Activated CD4-positive, alpha-beta memory T cell treated with anti-CD3 and anti-CD28 coated beads for 36 hours (primary cell): ENCODE measurements at regions of chr1 and their contacts with region 1.

Region 1: GRCh38 chr1:205354259-205354904 is 2.3 kb downstream of the KLHDC8A start:
- DNase-seq: peak; percentile 68
- H3K4me3 Mint-ChIP-seq: no peak overlapping the region
- H3K27ac Mint-ChIP-seq: no peak overlapping the region
- H3K4me1 Mint-ChIP-seq: no peaks in the 10 kb centered on the region
- H3K27me3 Mint-ChIP-seq: peaks cover 13% of the 10 kb centered on the region

Region 2: GRCh38 chr1:205220421-205220820 is 134.0 kb before region 1 on chr1:
- CTCF ChIA-PET with region 1: no interaction called
- POLR2A ChIA-PET with region 1: no interaction called
- intact Hi-C with region 1: no loop called
- DNase-seq: no peak
- H3K4me3 Mint-ChIP-seq: no peak overlapping the region
- H3K27ac Mint-ChIP-seq: no peak overlapping the region
- H3K4me1 Mint-ChIP-seq: peaks cover 1% of the 10 kb centered on the region
- H3K27me3 Mint-ChIP-seq: peaks cover 4% of the 10 kb centered on the region

Region 3: GRCh38 chr1:205321164-205321958 is 33.0 kb before region 1 on chr1 and contains the start of gene NUAK2:
- CTCF ChIA-PET with region 1: interaction called, 12 read pairs
- POLR2A ChIA-PET with region 1: no interaction called
- intact Hi-C with region 1: no loop called
- DNase-seq: peak; percentile 89
- H3K4me3 Mint-ChIP-seq: peak within 1 kb of the TSS; percentile 88
- H3K27ac Mint-ChIP-seq: peak within 1 kb of the TSS; percentile 72
- H3K4me1 Mint-ChIP-seq: peaks cover 60% of the 10 kb centered on the region
- H3K27me3 Mint-ChIP-seq: peaks cover 2% of the 10 kb centered on the region
- total RNA-seq, gene NUAK2: 4.4 to 4.5 TPM

Region 4: DNA sequence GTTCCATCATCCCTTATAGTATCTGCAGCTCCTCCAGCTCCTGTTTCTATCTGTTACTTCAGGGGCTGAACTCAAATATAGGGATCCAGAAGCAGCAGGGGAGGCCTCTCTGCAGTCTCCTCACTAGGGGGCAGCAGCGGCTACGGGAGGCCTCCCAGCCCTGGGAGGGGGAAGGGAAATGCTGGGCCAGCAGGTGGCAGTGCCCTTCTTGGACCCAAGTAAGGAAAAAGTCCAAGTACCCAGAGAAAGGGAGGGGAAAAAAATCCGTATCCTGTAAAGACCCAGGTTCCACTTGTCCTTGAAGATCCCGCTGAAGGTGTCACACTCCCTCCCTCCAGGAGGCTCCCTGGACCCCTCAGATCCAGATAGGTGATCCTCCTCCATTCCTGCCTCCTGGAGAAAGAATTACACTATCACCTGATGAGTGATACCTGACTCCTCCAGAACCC is 18.7 kb before region 1 on chr1:
- CTCF ChIA-PET with region 1: interaction called, 34 read pairs
- POLR2A ChIA-PET with region 1: no interaction called
- intact Hi-C with region 1: no loop called
- DNase-seq: peak; percentile 89
- H3K4me3 Mint-ChIP-seq: no peak overlapping the region
- H3K27ac Mint-ChIP-seq: no peak overlapping the region
- H3K4me1 Mint-ChIP-seq: peaks cover 3% of the 10 kb centered on the region
- H3K27me3 Mint-ChIP-seq: no peaks in the 10 kb centered on the region

Region 5: GRCh38 chr1:205375835-205376545 is 21.6 kb after region 1 on chr1:
- CTCF ChIA-PET with region 1: interaction called, 10 read pairs
- POLR2A ChIA-PET with region 1: no interaction called
- intact Hi-C with region 1: no loop called
- DNase-seq: no peak
- H3K4me3 Mint-ChIP-seq: no peak overlapping the region
- H3K27ac Mint-ChIP-seq: no peak overlapping the region
- H3K4me1 Mint-ChIP-seq: peaks cover 21% of the 10 kb centered on the region
- H3K27me3 Mint-ChIP-seq: peaks cover 3% of the 10 kb centered on the region

Region 6: DNA sequence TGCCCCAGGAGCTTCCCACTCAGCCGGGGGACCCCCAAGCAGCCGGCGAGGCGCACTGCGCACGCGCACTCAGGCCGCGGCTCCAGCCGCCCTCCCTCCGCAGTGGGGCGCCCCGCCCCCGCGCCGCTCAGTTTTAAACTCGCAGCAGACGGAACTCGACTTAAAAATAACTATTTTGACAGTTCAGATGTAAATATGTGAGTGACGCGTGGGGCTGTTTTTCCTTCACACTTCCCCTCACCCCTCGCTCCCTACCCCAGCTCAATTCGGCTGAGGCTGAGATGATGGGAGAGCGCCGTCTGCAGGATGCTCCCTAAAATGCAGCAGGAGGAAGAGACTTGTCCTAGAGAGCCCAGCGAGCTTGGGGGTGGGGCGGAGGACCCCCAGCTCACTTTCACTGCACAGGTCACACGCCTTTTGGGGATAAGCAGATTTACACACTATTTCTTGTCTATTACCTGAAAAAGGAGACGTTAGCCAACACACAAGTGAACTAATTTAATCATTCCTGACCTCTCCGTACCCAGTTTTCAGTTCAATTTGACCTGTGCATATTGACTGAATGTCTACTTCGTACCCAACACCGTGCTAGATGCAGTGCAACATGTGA is 76.4 kb after region 1 on chr1:
- CTCF ChIA-PET with region 1: interaction called, 30 read pairs
- POLR2A ChIA-PET with region 1: no interaction called
- intact Hi-C with region 1: loop called (anchors 2 kb)
- DNase-seq: peak; percentile 73
- H3K4me3 Mint-ChIP-seq: peak overlapping the region; percentile 76
- H3K27ac Mint-ChIP-seq: no peak overlapping the region
- H3K4me1 Mint-ChIP-seq: peaks cover 10% of the 10 kb centered on the region
- H3K27me3 Mint-ChIP-seq: peaks cover 14% of the 10 kb centered on the region

Region 7: DNA sequence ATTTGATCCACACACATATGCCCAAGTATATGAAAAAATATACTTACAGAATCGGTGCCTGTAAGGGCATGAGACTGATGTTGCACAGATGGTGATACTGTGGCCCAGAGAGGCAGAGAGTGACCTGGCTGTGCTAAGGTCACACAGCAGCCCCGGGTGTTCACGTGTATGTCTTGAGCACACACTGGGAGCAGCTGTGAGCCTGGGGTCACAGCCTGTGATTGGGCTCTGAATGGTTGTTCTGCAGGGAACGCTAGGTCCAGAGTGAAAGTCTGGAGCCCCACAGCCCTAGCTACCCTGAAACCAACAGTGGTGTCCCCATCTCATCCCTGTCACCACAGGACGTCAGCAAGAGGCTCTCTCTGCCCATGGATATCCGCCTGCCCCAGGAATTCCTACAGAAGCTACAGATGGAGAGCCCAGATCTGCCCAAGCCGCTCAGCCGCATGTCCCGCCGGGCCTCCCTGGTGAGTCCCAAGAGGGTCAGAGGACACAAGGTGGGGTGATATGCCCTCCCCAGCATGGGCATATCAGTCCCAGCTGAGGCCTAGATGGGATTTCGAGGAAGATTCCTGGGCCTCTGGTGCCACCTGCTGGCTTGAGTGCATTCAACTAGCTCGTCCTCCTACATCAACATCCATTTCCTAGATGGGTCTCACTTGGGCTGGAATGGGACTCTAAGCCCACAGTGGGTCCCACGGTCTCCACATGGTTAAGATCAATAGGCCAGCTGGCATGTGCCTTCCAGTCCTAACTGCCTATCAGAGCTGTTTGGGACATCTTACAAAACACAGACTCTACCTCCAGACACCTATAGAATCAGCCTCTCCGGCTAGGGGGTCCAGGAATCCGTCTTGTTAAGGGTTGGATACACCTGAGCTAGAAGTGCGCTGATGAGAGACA is 169.8 kb after region 1 on chr1:
- CTCF ChIA-PET with region 1: interaction called, 109 read pairs
- POLR2A ChIA-PET with region 1: no interaction called
- intact Hi-C with region 1: loop called (anchors 1 kb)
- DNase-seq: peak; percentile 82
- H3K4me3 Mint-ChIP-seq: no peak overlapping the region
- H3K27ac Mint-ChIP-seq: no peak overlapping the region
- H3K4me1 Mint-ChIP-seq: no peaks in the 10 kb centered on the region
- H3K27me3 Mint-ChIP-seq: peaks cover 2% of the 10 kb centered on the region